ENCODE measurements at regions of chr19 and their contacts with region 1.

Region 1: GRCh38 chr19:58305065-58305931 is at the start of gene ERVK3-1:
- DNase-seq: peak; percentile 96
- ATAC-seq: peak; percentile 98
- H3K4me3 ChIP-seq: peak within 1 kb of the TSS; percentile 83 to 100 (median 97)
- H3K27ac ChIP-seq: peak within 1 kb of the TSS; percentile 66
- H3K4me1 ChIP-seq: peaks cover 26% of the 10 kb centered on the region
- H3K27me3 ChIP-seq: no peaks in the 10 kb centered on the region; a peak in 1 of 5 replicates
- CTCF ChIP-seq: peak; percentile 33; the same call in 1 of the 2 replicates
- EP300 ChIP-seq: no peak
- POLR2A ChIP-seq: peak; percentile 70 to 96
- RAD21 ChIP-seq: 0 out of 2 replicates have a peak, but pooled peaks have one; percentile 8
- total RNA-seq, gene ERVK3-1: 38.7 and 39.5 TPM in 2 replicates

Region 2: GRCh38 chr19:58278157-58279041 is 26.9 kb before region 1 on chr19 and contains the start of gene ZNF8:
- CTCF ChIA-PET with region 1: no interaction called
- POLR2A ChIA-PET with region 1: interaction called, 9 read pairs
- in situ Hi-C with region 1: no loop called
- intact Hi-C with region 1: loop called (anchors 1 kb)
- DNase-seq: peak; percentile 97
- ATAC-seq: peak; percentile 97
- H3K4me3 ChIP-seq: peak within 1 kb of the TSS; percentile 94 to 96 (median 96)
- H3K27ac ChIP-seq: peak within 1 kb of the TSS; percentile 85
- H3K4me1 ChIP-seq: peaks cover 37% of the 10 kb centered on the region
- H3K27me3 ChIP-seq: no peaks in the 10 kb centered on the region; a peak in 1 of 5 replicates
- CTCF ChIP-seq: peak; percentile 35; the same call in 1 of the 2 replicates
- EP300 ChIP-seq: 0 out of 4 replicates have a peak, but pooled peaks of 1 of the 2 experiments have one; percentile 17
- POLR2A ChIP-seq: peak; percentile 81 to 88
- RAD21 ChIP-seq: no peak
- total RNA-seq, gene ZNF8: 3.3 and 3.7 TPM in 2 replicates